Activated naive CD4-positive, alpha-beta T cell treated with anti-CD3 and anti-CD28 coated beads for 36 hours (primary cell): ENCODE measurements at regions of chr15 and their contacts with region 1.

Region 1: DNA sequence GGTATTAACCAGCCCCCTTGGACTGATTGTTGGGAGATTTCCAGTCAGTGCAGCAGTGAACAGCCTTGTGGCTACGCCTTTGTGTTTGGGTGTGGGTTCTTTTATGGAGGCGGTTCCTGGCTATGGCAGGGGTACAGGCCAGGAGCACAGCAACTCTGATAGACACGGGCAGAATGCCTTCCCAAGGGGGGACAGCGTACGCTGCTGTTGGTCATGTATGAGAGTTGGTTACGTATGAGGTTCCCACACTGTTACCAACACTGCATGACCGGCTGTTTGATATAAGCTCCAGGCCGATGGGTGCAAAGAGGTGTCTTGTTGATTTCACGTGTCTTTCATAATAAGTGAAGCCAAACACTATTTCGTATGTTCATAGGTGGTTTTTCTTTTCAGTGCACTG is 187.8 kb downstream of the NSMCE3 start:
- DNase-seq: no peak
- H3K4me3 Mint-ChIP-seq: no peak overlapping the region
- H3K27ac Mint-ChIP-seq: no peak overlapping the region
- H3K4me1 Mint-ChIP-seq: peaks cover 3% of the 10 kb centered on the region
- H3K27me3 Mint-ChIP-seq: no peaks in the 10 kb centered on the region

Region 2: DNA sequence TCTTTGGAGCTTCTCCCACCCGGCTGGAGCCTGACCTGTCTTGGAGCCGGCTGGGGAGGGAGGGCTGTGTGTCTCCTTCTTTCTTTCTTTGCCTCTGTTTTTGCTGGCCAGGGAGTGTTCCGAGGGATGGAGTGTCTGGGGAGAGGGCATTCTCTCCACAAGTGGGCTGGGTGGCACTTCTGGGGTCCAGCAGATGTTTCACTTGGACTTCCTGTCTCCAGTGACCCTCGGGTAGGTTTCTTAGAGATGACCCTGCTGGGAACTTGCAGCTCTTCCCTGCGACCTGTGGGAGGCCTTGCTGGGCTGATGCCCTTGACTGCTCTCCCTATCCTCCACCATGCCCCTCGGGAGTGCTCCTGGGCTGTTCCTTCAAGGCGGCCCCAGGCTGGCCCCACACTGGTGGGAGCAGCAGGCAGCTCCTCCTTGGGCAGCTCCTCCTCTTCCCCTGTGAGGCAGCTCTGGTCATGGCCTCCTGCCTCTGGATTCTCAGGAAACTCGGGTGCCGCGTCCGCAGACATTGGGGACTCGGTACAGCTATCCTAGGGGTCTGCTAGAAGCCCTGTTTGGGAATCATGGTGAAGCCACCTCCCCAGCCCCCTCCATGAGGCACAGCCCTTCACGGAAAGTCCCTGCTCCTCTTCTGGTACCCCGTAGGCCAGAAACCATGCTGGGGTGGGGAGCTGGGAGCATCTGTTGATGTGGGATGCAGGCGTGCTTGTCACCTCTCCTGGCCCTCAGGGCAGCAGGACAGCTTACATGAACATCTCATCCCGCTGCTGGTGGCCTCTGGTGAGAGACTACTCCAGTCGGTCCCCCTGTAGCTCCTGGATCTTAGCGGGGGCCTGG is 151.1 kb before region 1 on chr15:
- CTCF ChIA-PET with region 1: no interaction called
- intact Hi-C with region 1: no loop called
- DNase-seq: no peak
- H3K4me3 Mint-ChIP-seq: no peak overlapping the region
- H3K27ac Mint-ChIP-seq: no peak overlapping the region
- H3K4me1 Mint-ChIP-seq: peaks cover 33% of the 10 kb centered on the region
- H3K27me3 Mint-ChIP-seq: no peaks in the 10 kb centered on the region

Region 3: GRCh38 chr15:28967066-28967465 is 114.7 kb before region 1 on chr15:
- CTCF ChIA-PET with region 1: no interaction called
- intact Hi-C with region 1: no loop called
- DNase-seq: no peak
- H3K4me3 Mint-ChIP-seq: no peak overlapping the region
- H3K27ac Mint-ChIP-seq: no peak overlapping the region
- H3K4me1 Mint-ChIP-seq: peaks cover 34% of the 10 kb centered on the region
- H3K27me3 Mint-ChIP-seq: no peaks in the 10 kb centered on the region

Region 4: DNA sequence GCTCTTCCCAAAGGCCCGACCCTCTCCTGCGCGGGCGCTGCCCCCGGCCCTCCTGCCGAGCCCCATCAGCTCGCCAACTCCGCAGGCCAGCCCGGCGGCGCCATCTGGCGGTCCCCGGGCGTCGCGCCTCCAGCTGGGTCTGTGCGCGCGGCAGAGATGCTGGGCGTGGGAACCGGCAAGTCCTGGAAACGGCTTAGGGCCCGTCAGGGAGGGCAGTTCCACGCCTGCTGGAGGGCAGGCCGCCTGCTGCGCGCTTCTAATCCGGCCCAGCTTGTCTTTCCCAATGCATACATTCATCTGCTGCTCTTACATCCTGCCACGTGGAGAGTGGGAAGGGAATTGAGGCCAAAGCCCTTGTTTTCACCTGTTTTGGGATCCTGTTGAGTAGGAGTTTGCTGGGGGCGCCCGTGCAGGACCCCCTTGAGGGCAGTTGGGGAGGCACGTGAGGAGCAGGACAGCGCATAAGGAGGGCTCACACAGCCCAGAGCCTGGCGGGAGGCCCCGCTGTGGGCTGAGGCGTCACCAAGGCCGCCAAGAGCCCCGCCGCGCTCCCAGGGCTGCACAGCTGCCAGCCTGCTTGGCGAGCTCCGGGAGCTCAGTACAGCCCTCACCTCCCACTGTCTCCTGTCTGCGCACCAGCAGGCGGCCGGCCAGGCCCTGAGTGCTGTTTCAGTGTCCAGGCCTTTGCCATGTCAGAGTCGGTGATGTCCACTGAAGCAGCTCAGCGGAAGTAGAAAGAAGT is 22.2 kb after region 1 on chr15:
- CTCF ChIA-PET with region 1: interaction called, 13 read pairs
- intact Hi-C with region 1: no loop called
- DNase-seq: peak; percentile 59
- H3K4me3 Mint-ChIP-seq: no peak overlapping the region
- H3K27ac Mint-ChIP-seq: no peak overlapping the region
- H3K4me1 Mint-ChIP-seq: no peaks in the 10 kb centered on the region
- H3K27me3 Mint-ChIP-seq: no peaks in the 10 kb centered on the region

Region 5: DNA sequence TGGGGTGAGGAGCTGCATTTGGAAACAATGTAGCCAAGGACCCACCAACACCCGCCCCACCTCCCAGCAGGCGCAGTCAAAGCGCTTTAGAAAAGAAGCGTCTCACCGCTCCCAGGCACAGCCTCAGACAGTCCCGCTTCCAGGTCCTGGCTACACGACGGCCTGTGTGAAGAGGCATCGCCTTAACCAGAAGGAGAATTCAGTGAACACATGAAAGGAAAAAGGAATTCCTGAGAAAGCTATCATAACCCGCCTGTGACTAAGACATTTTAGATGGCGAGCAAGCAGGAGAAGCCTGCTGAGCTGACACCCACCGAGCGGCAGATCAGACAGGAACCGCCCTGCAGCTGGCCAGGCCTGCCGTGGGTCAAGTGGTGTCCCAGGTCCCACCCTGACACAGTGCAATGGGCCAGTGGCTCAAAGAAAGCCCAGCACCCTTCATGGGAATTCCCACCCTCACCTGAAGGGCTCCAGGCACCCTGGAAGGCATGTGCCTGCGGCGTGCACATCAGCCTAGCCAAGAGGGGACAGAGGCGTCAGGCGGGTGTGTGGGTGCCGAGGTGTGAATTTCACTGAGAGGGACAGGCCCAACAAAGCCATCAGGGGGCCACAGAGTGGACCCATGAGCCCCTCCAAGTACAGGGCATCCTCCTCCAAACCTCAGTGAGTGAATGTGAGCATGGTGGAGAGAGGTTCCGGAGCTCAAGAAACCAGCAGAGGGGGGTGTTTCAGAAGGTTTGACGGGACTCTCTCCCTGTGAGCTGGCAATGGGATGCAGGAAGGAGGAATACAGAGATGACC is 43.0 kb after region 1 on chr15:
- CTCF ChIA-PET with region 1: no interaction called
- intact Hi-C with region 1: no loop called
- DNase-seq: no peak
- H3K4me3 Mint-ChIP-seq: no peak overlapping the region
- H3K27ac Mint-ChIP-seq: no peak overlapping the region
- H3K4me1 Mint-ChIP-seq: no peaks in the 10 kb centered on the region
- H3K27me3 Mint-ChIP-seq: no peaks in the 10 kb centered on the region